Common myeloid progenitor, CD34-positive (primary cell): ENCODE measurements at regions of chr4 and their contacts with region 1.

Region 1: GRCh38 chr4:18366892-18367291 is 345.3 kb upstream of the LCORL start:
- DNase-seq: peak; percentile 43 to 71 (median 68)
- H3K4me3 ChIP-seq: no peak overlapping the region
- H3K27ac ChIP-seq: no peak overlapping the region
- H3K4me1 ChIP-seq: no peaks in the 10 kb centered on the region
- H3K27me3 ChIP-seq: no peaks in the 10 kb centered on the region

Region 2: DNA sequence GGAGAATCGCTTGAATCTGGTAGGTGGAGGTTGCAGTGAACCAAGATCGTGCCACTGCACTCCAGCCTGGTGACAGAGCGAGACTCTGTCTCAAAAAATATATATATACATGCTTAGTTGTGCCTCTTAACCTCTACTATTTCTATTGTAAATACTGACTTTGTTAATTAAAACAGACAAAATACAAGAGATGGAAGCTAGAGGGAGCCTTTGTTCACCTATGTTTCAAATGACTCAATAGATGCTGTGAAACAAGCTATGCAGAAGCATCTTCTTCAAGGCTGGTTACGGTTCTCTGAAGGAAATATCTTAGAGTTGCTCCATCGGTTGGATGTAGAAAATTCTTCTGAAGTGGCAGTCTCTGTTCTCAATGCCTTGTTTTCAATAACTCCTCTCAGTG is 549.9 kb before region 1 on chr4:
- CTCF ChIA-PET with region 1: interaction called, 18 read pairs
- POLR2A ChIA-PET with region 1: no interaction called
- DNase-seq: peak; percentile 58 to 80 (median 76)
- H3K4me3 ChIP-seq: peak overlapping the region in 1 of 7 experiments; percentile 25
- H3K27ac ChIP-seq: no peak overlapping the region
- H3K4me1 ChIP-seq: peaks cover 0 to 21% (median 13%) of the 10 kb centered on the region in 4 experiments
- H3K27me3 ChIP-seq: no peaks in the 10 kb centered on the region

Region 3: DNA sequence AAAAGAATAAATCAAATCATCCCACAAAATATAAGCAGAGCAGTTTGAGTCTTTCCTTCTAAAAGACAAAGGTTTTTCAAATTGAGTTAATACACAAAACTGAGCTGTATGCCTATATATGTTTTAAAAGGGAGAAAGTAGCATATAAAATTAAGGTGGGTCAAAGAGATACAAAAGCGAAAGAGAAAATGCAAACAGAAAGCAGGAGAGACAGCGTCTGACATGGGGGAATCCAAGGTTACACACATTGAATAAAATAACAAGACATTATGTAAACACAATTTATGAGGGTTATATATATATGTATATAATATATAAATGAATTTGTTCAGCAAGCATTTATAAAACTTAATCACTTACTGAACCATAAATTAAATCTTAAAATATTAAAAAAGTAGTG is 69.2 kb before region 1 on chr4:
- CTCF ChIA-PET with region 1: no interaction called
- POLR2A ChIA-PET with region 1: no interaction called
- DNase-seq: no peak
- H3K4me3 ChIP-seq: no peak overlapping the region
- H3K27ac ChIP-seq: no peak overlapping the region
- H3K4me1 ChIP-seq: no peaks in the 10 kb centered on the region
- H3K27me3 ChIP-seq: no peaks in the 10 kb centered on the region

Region 4: GRCh38 chr4:18388039-18388438 is 21.1 kb after region 1 on chr4:
- CTCF ChIA-PET with region 1: no interaction called
- POLR2A ChIA-PET with region 1: no interaction called
- DNase-seq: no peak
- H3K4me3 ChIP-seq: no peak overlapping the region
- H3K27ac ChIP-seq: no peak overlapping the region
- H3K4me1 ChIP-seq: no peaks in the 10 kb centered on the region
- H3K27me3 ChIP-seq: no peaks in the 10 kb centered on the region

Region 5: GRCh38 chr4:18419780-18420179 is 52.9 kb after region 1 on chr4:
- CTCF ChIA-PET with region 1: no interaction called
- POLR2A ChIA-PET with region 1: no interaction called
- DNase-seq: no peak
- H3K4me3 ChIP-seq: no peak overlapping the region
- H3K27ac ChIP-seq: no peak overlapping the region
- H3K4me1 ChIP-seq: peaks cover 0 to 3% (median 0%) of the 10 kb centered on the region in 4 experiments
- H3K27me3 ChIP-seq: no peaks in the 10 kb centered on the region

Region 6: DNA sequence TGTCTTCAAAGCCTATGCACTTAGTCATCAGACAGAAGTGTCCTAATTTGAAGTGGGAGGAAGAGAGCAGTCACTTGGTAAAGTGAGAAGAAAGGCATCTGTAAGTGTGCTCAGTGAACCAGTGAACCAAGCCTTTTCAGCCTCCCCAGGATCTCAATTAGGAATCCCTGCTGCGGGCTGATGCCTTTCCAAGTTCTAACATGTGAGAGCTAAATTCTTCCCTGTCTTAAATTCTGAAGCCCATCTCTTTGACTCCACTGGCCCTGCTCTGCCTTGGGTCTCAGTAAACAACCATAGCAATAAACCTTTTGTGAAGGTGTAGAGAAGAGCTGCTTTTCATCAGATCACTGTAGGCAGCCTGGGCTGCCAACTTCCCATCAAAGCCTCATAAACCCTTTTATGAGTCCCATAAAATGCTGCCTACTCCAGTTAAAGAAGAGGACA is 355.9 kb after region 1 on chr4:
- CTCF ChIA-PET with region 1: no interaction called
- POLR2A ChIA-PET with region 1: no interaction called
- DNase-seq: no peak
- H3K4me3 ChIP-seq: no peak overlapping the region
- H3K27ac ChIP-seq: no peak overlapping the region
- H3K4me1 ChIP-seq: no peaks in the 10 kb centered on the region
- H3K27me3 ChIP-seq: no peaks in the 10 kb centered on the region